B cell (primary cell): ENCODE measurements at regions of chr16 and their contacts with region 1.

Region 1: DNA sequence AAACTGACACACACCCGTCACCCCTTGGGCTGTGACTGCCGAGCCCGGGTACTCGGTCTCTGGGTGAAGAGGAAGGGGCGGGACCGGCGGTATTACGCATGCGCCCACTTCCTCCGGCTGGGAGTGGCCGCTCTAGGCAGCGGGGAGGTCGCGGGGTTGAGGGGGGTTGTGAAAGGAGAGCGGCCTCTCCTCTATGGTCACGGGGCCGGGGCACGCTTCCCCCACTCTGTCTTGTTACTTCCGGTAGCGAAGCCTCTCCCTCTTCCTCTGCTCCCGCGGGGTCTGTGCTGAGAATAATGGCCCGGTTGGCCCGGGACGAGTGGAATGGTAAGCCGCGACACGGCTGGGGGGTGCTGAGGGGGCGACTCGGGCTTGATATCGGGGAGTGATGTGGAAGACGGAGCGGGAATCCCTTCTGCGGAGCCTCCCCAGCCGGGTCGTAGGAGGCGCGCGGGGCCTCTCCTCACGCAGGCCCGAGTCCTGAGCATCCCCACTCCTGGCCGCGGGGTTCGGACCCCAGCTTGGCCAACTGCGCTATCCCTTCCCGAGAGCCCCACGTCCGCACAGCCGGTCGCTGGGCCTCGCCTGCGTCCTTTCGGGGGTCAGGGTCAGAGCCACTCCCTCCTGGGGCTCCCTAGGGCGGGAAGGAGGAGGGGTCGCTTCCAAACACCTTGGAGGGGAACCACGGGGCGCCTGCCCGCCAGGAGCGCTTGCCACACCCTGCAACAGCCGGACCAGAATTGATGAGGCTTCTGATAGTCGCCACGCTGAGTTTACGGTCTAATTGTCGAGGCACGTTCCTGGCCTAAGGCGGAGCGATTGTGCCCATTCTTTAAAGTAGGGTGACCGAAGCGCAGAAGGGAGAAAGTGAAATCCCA is at the start of gene BFAR:
- DNase-seq: peak; percentile 99
- ATAC-seq: peak; percentile 77
- H3K4me3 ChIP-seq: peak within 1 kb of the TSS; percentile 65 to 96 (median 92)
- H3K4me3 Mint-ChIP-seq: peak within 1 kb of the TSS; percentile 100
- H3K27ac ChIP-seq: peak within 1 kb of the TSS; percentile 89 to 91
- H3K27ac Mint-ChIP-seq: peak within 1 kb of the TSS; percentile 100
- H3K4me1 ChIP-seq: peaks cover 38 to 45% of the 10 kb centered on the region in 2 donors
- H3K4me1 Mint-ChIP-seq: peaks cover 59% of the 10 kb centered on the region
- H3K27me3 ChIP-seq: no peaks in the 10 kb centered on the region
- H3K27me3 Mint-ChIP-seq: no peaks in the 10 kb centered on the region
- CTCF ChIP-seq: no peak
- total RNA-seq, gene BFAR: 72.9 and 73.5 TPM in 2 replicates

Region 2: DNA sequence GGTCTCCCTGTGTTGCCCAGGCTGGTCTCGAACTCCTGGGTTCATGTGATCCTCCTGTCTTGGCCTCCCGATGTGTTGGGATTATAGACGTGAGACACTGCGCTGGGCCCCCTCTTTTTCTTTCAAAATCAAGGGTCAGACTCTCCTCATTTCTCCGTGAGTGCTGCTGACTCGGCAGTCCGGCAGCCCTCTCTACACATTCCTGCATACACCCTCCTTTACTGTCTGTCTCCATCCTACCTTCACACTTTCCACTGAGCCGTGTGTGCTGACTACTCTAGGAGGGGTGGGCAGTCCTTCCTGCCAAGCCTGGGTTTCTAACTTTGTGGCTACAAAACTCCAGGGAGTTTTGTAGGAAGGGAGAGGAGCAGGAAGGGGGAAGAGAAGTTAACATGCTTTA is 198.1 kb before region 1 on chr16:
- CTCF ChIA-PET with region 1: no interaction called
- POLR2A ChIA-PET with region 1: interaction called, 10 read pairs
- intact Hi-C with region 1: no loop called
- DNase-seq: no peak
- ATAC-seq: no peak
- H3K4me3 ChIP-seq: no peak overlapping the region
- H3K4me3 Mint-ChIP-seq: no peak overlapping the region
- H3K27ac ChIP-seq: no peak overlapping the region
- H3K27ac Mint-ChIP-seq: no peak overlapping the region
- H3K4me1 ChIP-seq: no peaks in the 10 kb centered on the region
- H3K4me1 Mint-ChIP-seq: no peaks in the 10 kb centered on the region
- H3K27me3 ChIP-seq: no peaks in the 10 kb centered on the region
- H3K27me3 Mint-ChIP-seq: no peaks in the 10 kb centered on the region
- CTCF ChIP-seq: no peak

Region 3: GRCh38 chr16:15055141-15056053 is 422.5 kb after region 1 on chr16:
- CTCF ChIA-PET with region 1: no interaction called
- POLR2A ChIA-PET with region 1: no interaction called
- intact Hi-C with region 1: loop called (anchors 2 kb)
- DNase-seq: peak; percentile 91
- ATAC-seq: peak; percentile 70
- H3K4me3 ChIP-seq: peak overlapping the region; percentile 48 to 97 (median 81)
- H3K4me3 Mint-ChIP-seq: peak overlapping the region; percentile 86
- H3K27ac ChIP-seq: peak overlapping the region; percentile 67 to 71
- H3K27ac Mint-ChIP-seq: peak overlapping the region; percentile 81
- H3K4me1 ChIP-seq: peaks cover 13 to 20% of the 10 kb centered on the region in 2 donors
- H3K4me1 Mint-ChIP-seq: peaks cover 19% of the 10 kb centered on the region
- H3K27me3 ChIP-seq: no peaks in the 10 kb centered on the region
- H3K27me3 Mint-ChIP-seq: no peaks in the 10 kb centered on the region
- CTCF ChIP-seq: peak; percentile 46

Region 4: GRCh38 chr16:15888072-15888976 is 1255.4 kb after region 1 on chr16 and contains the start of gene CEP20:
- CTCF ChIA-PET with region 1: no interaction called
- POLR2A ChIA-PET with region 1: no interaction called
- intact Hi-C with region 1: loop called (anchors 5 kb)
- DNase-seq: peak; percentile 100
- ATAC-seq: peak; percentile 98
- H3K4me3 ChIP-seq: peak within 1 kb of the TSS; percentile 66 to 99 (median 96)
- H3K4me3 Mint-ChIP-seq: peak within 1 kb of the TSS; percentile 95
- H3K27ac ChIP-seq: peak within 1 kb of the TSS; percentile 64 to 76
- H3K27ac Mint-ChIP-seq: peak within 1 kb of the TSS; percentile 95
- H3K4me1 ChIP-seq: peaks cover 14 to 16% of the 10 kb centered on the region in 2 donors
- H3K4me1 Mint-ChIP-seq: peaks cover 31% of the 10 kb centered on the region
- H3K27me3 ChIP-seq: no peaks in the 10 kb centered on the region
- H3K27me3 Mint-ChIP-seq: no peaks in the 10 kb centered on the region
- CTCF ChIP-seq: no peak
- total RNA-seq, gene CEP20: 29.3 and 30.2 TPM in 2 replicates